ENCODE measurements at regions of chr16 and their contacts with region 1.

Region 1: DNA sequence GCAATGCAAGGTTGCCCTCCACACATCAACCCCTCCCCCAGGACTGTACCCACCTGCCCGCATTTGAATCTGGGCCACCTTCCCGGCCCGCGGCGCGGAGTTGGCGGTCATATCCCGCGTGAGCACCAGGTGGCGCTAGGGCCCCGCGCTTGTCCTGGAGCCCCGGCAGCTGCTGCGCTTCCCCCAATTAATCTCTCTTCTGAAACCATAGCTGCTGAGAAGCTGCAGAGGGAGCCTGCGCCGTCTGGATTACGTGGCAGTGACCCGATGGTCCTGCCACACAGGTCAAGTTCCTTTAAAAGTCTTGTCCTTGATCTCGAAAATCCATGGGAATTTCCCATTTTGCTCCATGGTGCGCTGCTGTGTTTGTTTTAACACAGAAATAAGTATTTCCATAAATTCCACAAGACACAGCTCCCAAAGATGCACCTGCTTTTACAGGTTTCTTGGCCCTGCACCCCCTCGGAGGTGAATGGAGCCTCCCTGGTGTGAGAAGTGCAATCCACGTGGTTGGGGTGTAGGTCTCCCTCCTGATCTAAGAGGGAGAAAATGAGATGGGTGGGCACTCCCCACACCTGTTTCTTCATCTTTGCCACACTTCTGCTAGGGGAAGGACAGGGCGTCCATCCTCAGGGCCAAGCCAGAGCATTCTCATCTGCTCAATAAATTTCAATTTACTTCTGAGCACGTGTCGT is 22.1 kb downstream of the COX4I1 start:
- DNase-seq: peak; percentile 88
- ATAC-seq: peak; percentile 90

Region 2: DNA sequence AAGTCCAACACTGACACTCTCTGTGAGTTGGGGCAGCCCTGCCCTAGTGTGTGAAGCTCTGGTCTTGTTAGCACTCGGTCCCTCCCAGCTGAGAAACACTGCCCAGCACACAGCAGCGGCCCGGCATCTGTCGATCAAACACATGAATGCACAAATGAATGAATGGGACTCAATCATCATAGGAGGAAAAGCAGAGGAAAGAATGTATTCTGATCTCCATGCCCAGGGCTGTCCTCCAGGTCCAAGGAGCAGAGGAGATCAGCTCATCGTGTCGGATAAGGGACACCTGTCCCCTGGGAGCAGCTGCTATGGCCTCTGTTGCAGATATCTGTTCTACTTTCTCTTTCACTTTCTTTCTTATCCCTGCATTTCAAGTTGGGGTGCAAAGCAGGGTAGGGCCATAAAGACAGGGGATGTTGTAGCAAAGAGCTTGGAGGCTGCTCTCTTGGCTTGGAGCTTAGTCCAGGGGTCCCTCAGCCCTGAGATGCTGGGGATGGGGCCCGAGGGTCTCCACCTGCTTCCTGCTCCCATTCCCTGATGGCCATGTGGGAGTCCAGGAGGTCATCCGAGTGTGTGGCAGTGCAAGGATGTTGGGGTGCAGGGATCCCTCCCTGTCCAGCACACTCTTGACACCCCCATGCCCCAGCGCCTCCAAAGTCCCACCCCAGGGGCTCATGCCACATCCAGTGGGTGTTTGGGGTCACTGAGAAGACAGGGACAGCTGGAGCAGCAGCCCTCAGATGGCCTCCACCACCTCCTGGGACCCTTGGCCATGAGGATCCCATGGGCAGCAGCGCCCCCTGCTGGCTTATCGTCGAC is 165.6 kb after region 1 on chr16:
- intact Hi-C with region 1: loop called (anchors 1 kb)
- DNase-seq: no peak
- ATAC-seq: peak; percentile 45

Region 3: GRCh38 chr16:86016201-86016871 is 194.7 kb after region 1 on chr16:
- intact Hi-C with region 1: loop called (anchors 2 kb)
- DNase-seq: no peak
- ATAC-seq: peak; percentile 74

Region 4: DNA sequence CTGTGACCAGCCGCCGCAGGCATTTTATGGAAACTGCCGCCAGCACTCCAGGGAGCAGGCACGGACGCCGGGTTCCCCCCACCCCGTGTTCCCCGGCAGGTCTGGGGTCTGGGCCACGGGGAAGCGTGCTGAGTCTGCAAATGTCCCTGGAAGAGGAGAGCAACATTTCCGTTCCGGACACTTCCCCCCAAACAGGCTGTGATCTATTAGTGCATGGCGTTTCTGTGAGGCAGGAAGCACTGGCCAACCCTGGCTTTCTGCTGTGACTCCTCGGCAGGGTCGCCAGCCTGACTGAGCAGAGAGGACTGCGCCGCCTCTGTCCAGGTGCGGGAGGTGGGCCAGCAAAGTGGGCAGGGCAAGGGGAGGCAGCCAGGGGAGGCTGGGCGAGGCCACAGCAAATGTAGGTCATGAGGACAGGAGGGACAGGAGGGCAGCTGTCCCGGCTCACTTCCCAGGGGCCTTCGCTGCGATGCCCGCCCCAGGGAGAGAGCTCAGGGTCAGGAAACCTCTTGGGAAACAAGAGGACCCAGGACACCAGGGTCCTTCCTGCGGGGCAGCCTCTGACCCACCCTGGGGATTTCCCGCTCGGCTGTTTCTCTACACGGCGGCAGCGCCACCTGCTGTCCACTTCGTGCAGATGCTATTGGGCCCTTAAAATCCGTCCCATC is 698.2 kb after region 1 on chr16:
- intact Hi-C with region 1: loop called (anchors 10 kb)
- DNase-seq: peak; percentile 77
- ATAC-seq: peak; percentile 69

Measured in Right ventricle myocardium superior (tissue), 1 donor.